ENCODE measurements at regions of chr13 and their contacts with region 1.

Region 1: DNA sequence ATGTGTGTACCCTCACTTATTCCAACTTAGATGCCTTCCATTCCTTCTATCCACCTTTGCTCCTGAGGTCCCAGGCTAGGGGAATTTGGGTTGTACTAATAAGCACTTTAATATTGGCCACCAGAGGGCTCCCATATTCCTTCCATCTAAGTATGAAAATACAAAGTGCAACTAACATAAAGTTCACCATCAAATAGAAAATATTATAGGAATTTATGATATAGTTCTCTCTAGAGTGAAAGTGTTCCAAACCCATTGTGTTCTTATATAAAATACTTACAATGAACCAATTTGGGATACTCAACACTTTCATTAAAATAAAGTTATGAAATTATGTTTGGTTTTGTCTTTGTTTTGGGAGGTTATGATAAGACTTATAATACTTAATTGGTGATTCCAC is 62.3 kb downstream of the ITGBL1 start:
- DNase-seq: no peak
- H3K4me3 ChIP-seq: no peak overlapping the region
- H3K27ac ChIP-seq: no peak overlapping the region
- H3K4me1 ChIP-seq: no peaks in the 10 kb centered on the region
- H3K27me3 ChIP-seq: no peaks in the 10 kb centered on the region
- CTCF ChIP-seq: peak; percentile 41 to 55 (median 53)

Region 2: DNA sequence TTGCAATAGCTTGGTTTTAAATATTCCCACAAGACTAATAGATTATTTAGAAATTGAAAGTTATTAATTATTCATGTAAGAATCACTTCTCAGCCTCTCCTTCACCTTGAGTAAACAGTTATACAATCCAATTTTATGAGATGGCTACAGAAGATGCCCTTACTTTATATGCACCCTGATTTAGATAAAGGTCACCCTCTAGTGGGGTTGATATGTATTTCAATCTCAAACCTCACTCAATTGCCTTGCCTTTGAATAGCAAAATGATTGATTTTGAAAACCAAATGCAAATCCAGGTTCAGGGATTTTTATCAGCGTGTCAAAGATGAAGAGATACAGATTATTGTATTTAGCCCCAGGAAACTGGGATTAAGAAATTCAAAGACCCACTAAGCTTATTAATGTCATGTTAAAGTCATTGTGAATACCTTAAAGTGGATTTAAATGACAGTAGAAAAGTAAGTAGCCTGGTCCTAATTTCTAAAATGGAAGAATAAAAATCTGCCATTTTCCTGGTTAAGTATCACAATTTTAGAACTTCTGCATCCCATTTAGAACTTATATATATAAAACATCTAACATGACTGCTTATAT is 242.8 kb after region 1 on chr13:
- dilution Hi-C with region 1: loop called (anchors 25 kb)
- DNase-seq: peak; percentile 0
- H3K4me3 ChIP-seq: no peak overlapping the region
- H3K27ac ChIP-seq: no peak overlapping the region
- H3K4me1 ChIP-seq: no peaks in the 10 kb centered on the region
- H3K27me3 ChIP-seq: no peaks in the 10 kb centered on the region
- CTCF ChIP-seq: peak in 2 of 3 experiments; percentile 36 to 50